ENCODE measurements at regions of chr18 and their contacts with region 1.

Region 1: DNA sequence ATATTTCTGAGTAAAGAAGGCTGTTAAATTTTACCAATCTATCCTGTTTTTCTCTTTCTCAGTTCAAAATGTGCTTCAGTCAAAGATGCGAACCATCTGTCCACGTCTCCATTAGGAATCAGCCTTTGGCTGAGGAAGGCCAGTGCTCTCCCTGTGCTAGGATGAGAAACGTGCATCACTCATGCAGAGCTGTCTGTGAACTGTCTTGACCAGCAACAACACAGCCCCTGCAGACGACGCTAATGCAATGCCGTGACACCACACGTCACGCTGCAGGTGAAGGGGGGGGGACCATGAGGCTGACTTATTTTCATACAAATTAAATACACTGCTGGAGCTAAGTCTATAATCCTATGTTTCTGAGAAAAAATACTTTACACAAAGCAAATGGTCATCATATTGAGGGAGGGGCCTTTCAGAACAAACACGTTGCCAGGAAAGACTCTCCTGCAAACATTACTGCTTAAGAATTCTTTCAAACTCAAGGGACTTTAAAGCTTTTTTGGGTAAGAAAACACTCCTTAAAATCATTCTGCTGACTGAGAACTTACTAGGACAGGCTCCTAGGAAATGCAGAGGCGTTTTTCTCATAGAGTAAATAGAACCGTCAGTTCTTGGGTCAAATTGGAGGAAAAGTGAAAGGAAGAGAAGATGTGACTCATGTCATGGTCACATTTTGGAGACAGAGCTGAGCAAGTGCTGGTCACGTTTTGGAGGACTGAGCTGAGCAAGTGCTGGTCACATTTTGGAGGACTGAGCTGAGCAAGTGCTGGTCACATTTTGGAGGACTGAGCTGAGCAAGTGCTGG is 97.0 kb downstream of the MBP start:
- DNase-seq: peak; percentile 83
- ATAC-seq: peak; percentile 88
- H3K4me3 ChIP-seq: peak overlapping the region; percentile 52
- H3K27ac ChIP-seq: peak overlapping the region; percentile 95
- H3K4me1 ChIP-seq: peaks cover 24% of the 10 kb centered on the region
- H3K27me3 ChIP-seq: no peaks in the 10 kb centered on the region
- CTCF ChIP-seq: no peak

Region 2: DNA sequence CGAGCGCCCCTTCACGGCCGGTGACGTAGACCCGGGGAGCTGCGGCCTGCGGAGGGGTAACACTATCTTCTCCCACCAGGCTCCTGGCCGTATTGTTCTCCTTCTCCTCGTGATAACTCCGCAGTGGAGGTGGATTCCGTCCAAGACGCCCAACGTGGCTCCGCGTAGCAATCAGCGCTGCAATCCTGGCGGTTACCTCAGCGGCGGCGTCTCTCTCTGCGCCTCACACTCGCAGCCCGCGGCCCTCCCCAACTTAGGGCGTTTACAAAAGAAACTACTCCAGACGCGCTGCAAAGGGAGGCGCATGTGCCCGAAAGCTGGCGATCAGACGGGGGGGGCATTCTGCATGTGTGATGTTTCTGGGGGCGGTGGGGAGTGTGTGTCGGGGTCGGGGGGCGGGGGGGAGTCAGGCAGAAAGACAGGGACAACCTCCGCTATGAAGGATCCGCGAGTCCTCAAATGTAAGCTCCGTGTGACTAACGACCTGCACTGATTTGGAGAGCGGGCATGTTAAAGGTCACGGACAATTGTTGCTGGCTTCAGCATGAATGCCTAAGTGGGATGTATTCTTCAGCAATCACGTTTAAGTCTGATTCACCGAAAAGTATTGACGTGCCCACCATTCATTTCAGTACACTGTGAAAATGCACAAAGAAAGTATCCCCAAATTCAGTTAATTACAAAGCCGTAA is 539.2 kb before region 1 on chr18:
- CTCF ChIA-PET with region 1: no interaction called
- POLR2A ChIA-PET with region 1: no interaction called
- intact Hi-C with region 1: no loop called
- DNase-seq: no peak
- ATAC-seq: no peak
- H3K4me3 ChIP-seq: no peak overlapping the region
- H3K27ac ChIP-seq: no peak overlapping the region
- H3K4me1 ChIP-seq: no peaks in the 10 kb centered on the region
- H3K27me3 ChIP-seq: peaks cover 78% of the 10 kb centered on the region
- CTCF ChIP-seq: no peak

Region 3: DNA sequence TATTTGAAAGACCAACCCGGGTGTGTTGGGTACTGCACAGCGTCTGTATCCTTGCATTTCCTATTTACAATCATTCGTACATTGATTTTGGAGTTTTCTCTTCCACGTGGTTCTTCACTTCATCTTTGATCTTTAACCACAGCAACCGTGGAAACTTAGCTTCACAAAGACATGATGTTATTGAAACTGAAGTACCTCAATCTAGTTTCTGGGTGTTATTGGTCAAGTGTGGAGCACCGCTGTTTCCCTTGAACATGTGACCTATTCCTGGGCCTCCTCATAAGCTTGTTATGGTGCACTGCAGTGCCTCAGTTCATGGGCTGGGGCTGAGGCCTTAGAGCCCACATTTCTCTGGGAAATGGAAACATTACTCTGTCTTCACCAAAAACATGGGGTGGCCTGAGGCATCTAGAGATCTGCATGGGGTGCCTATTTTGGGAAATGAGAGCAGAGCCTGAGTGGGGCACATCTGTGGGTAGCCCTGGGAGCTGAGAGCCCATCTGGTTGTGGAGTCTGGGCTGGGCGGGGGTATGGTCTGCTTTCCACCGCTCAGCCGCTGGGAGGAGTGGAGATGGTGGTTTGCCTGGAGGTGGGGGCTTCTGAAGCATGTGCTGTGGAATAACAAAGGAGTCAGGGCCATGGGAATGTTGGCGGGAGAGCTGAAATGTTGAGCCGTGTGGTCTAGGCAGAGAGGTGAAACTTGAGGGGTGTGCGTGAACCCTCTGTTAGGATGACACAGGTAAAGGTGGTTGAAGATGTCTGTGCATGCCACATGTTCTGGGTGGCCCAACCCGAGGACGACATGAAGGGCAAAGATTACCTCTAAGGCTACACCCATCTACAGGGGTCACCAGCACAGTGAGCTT is 175.9 kb before region 1 on chr18:
- CTCF ChIA-PET with region 1: no interaction called
- POLR2A ChIA-PET with region 1: no interaction called
- intact Hi-C with region 1: no loop called
- DNase-seq: no peak
- ATAC-seq: no peak
- H3K4me3 ChIP-seq: no peak overlapping the region
- H3K27ac ChIP-seq: no peak overlapping the region
- H3K4me1 ChIP-seq: no peaks in the 10 kb centered on the region
- H3K27me3 ChIP-seq: no peaks in the 10 kb centered on the region
- CTCF ChIP-seq: no peak

Region 4: GRCh38 chr18:77054606-77055428 is 19.2 kb after region 1 on chr18:
- CTCF ChIA-PET with region 1: interaction called, 8 read pairs
- POLR2A ChIA-PET with region 1: no interaction called
- intact Hi-C with region 1: loop called (anchors 2 kb)
- DNase-seq: peak; percentile 93
- ATAC-seq: peak; percentile 92
- H3K4me3 ChIP-seq: peak overlapping the region; percentile 54
- H3K27ac ChIP-seq: peak overlapping the region; percentile 98
- H3K4me1 ChIP-seq: peaks cover 32% of the 10 kb centered on the region
- H3K27me3 ChIP-seq: no peaks in the 10 kb centered on the region
- CTCF ChIP-seq: peak; percentile 85

Region 5: GRCh38 chr18:77433076-77433475 is 397.5 kb after region 1 on chr18:
- CTCF ChIA-PET with region 1: no interaction called
- POLR2A ChIA-PET with region 1: no interaction called
- intact Hi-C with region 1: no loop called
- DNase-seq: no peak
- ATAC-seq: no peak
- H3K4me3 ChIP-seq: no peak overlapping the region
- H3K27ac ChIP-seq: no peak overlapping the region
- H3K4me1 ChIP-seq: no peaks in the 10 kb centered on the region
- H3K27me3 ChIP-seq: peaks cover 30% of the 10 kb centered on the region
- CTCF ChIP-seq: no peak